Activated CD4-positive, alpha-beta T cell treated with anti-CD3 and anti-CD28 coated beads, Interleukin-2, amount 10 ng/mL, durations not matched to agents 24 days and 14 days (primary cell): ENCODE measurements at regions of chr1 and their contacts with region 1.

Region 1: DNA sequence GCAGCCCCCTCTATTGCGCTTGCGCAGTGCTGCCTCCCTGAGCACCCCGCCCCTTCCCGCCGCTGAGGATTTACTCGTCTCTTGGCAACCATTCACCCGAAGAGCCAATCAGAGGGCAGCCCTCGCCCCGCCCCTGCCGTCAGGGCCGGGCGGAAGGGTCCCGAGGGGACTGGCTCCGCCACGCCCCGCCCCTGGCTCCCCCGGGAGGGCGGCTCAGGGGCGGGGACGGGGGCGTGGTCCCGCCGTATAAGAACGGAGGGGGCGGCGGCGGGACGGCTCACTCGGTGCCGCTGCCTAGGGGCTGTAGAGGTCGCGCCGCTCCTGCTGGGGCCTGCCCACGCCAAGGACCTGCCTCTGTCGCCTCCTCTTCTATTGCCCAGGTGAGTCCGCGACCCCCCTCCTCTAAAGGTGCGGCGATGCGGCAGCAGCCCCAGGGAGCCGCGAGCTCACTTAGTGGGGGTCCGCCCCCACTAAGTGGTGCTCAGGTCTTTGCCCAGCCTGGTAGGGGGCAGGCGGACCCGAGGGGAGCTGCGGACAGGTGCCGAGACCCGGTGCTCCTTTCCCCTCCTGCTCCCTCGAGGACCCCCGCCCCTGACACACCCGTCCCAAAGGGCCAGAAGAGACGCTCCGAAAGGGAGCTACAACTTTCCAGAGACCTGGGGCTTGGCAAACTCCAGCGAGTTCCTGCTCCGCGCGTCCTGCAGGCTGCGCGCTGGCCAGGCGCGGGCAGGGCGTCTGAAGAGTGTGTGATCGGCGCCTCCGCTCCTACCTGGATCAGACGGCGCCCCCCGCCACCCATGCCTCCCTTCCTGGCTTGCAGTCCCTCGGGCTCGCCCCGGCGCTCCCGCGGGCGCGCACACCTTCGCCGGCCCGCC is at the start of gene TENT5C:
- DNase-seq: peak; percentile 99
- H3K4me3 Mint-ChIP-seq: peak within 1 kb of the TSS; percentile 90
- H3K27ac Mint-ChIP-seq: peak within 1 kb of the TSS; percentile 89
- H3K4me1 Mint-ChIP-seq: peaks cover 47% of the 10 kb centered on the region
- H3K27me3 Mint-ChIP-seq: peaks cover 39% of the 10 kb centered on the region
- total RNA-seq, gene TENT5C: 3.1 and 3.5 TPM in 2 replicates

Region 2: GRCh38 chr1:116504308-116505156 is 1101.5 kb before region 1 on chr1:
- intact Hi-C with region 1: loop called (anchors 10 kb)
- DNase-seq: peak; percentile 96
- H3K4me3 Mint-ChIP-seq: peak overlapping the region; percentile 46
- H3K27ac Mint-ChIP-seq: peak overlapping the region; percentile 96
- H3K4me1 Mint-ChIP-seq: peaks cover 72% of the 10 kb centered on the region
- H3K27me3 Mint-ChIP-seq: no peaks in the 10 kb centered on the region

Region 3: GRCh38 chr1:117367047-117368018 is 238.7 kb before region 1 on chr1 and contains the start of gene MAN1A2:
- intact Hi-C with region 1: loop called (anchors 5 kb)
- DNase-seq: peak; percentile 95
- H3K4me3 Mint-ChIP-seq: peak within 1 kb of the TSS; percentile 93
- H3K27ac Mint-ChIP-seq: peak within 1 kb of the TSS; percentile 93
- H3K4me1 Mint-ChIP-seq: peaks cover 41% of the 10 kb centered on the region
- H3K27me3 Mint-ChIP-seq: no peaks in the 10 kb centered on the region
- total RNA-seq, gene MAN1A2: 23.9 and 28.7 TPM in 2 replicates

Region 4: DNA sequence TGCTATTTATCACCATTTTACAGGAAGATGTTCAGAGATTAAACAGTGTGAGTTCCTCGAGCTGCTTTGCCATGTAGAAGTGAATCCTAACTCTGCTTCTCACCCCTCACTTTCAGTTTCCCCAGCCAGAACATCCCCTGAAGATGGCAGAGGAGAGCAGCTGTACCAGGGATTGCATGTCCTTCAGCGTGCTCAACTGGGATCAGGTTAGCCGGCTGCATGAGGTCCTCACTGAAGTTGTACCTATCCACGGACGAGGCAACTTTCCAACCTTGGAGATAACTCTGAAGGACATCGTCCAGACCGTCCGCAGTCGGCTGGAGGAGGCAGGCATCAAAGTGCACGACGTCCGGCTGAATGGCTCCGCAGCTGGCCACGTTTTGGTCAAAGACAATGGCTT is 16.7 kb after region 1 on chr1:
- intact Hi-C with region 1: loop called (anchors 2 kb)
- DNase-seq: no peak
- H3K4me3 Mint-ChIP-seq: no peak overlapping the region
- H3K27ac Mint-ChIP-seq: no peak overlapping the region
- H3K4me1 Mint-ChIP-seq: peaks cover 19% of the 10 kb centered on the region
- H3K27me3 Mint-ChIP-seq: peaks cover 4% of the 10 kb centered on the region

Region 5: GRCh38 chr1:117654493-117655219 is 48.6 kb after region 1 on chr1:
- intact Hi-C with region 1: loop called (anchors 1 kb)
- DNase-seq: peak; percentile 75
- H3K4me3 Mint-ChIP-seq: peak overlapping the region; percentile 72
- H3K27ac Mint-ChIP-seq: peak overlapping the region; percentile 77
- H3K4me1 Mint-ChIP-seq: peaks cover 80% of the 10 kb centered on the region
- H3K27me3 Mint-ChIP-seq: peaks cover 12% of the 10 kb centered on the region

Region 6: DNA sequence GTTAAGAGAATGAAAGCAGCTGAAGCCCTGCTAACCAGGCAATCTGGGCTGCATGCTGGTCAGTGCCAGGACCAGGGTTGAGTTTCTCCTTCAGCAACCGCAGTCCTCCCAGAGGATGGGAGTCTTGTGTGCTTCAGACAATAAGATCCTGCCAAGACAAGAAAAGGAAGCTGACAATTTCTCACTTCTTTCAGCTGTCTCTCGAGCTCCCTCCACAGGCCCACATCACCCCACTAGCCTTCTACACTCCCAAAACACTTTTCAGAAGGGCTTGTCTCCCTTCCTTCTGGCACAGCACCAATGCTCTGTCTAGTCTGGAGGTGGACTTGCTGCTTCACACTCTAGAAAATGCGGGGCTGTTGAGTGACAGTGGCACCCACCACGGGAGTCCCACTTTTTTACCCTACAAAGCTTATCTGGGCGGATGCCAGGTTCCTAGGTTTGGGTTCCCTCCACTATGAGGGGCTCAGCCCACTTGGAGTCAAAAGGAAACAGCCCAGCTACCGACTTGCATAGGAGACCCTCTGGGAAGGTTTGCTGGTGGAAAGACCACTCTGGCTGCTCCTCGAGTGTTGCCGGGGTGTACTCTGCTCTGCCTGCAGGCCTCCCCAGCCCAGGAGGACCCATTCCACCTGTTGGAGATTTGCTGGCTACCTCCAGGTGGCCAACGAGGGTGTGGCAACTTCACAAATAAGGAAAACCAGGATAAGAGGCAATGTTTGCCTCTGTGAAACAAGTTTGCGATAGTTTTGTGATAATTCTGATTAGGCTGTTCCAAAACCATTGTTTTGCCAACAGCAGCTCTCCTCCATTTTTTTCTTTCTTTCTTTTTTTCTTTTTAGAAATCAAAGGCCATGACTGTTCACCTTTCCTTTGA is 68.7 kb after region 1 on chr1:
- intact Hi-C with region 1: loop called (anchors 2 kb)
- DNase-seq: peak; percentile 85
- H3K4me3 Mint-ChIP-seq: no peak overlapping the region
- H3K27ac Mint-ChIP-seq: no peak overlapping the region
- H3K4me1 Mint-ChIP-seq: peaks cover 21% of the 10 kb centered on the region
- H3K27me3 Mint-ChIP-seq: peaks cover 22% of the 10 kb centered on the region

Region 7: GRCh38 chr1:117929173-117929989 is 323.4 kb after region 1 on chr1 and contains the starts of genes GDAP2 and WDR3:
- intact Hi-C with region 1: loop called (anchors 1 kb)
- DNase-seq: peak; percentile 99
- H3K4me3 Mint-ChIP-seq: peak within 1 kb of the TSS; percentile 98
- H3K27ac Mint-ChIP-seq: peak within 1 kb of the TSS; percentile 95
- H3K4me1 Mint-ChIP-seq: peaks cover 36% of the 10 kb centered on the region
- H3K27me3 Mint-ChIP-seq: peaks cover 2% of the 10 kb centered on the region
- total RNA-seq, gene GDAP2: 22.2 and 25.7 TPM in 2 replicates
- total RNA-seq, gene WDR3: 79.8 and 81.7 TPM in 2 replicates